ENCODE measurements at regions of chr2 and their contacts with region 1.

Region 1: GRCh38 chr2:8681786-8682692 is at the start of gene ID2:
- DNase-seq: peak; percentile 99
- H3K4me3 Mint-ChIP-seq: peak within 1 kb of the TSS; percentile 98
- H3K27ac Mint-ChIP-seq: peak within 1 kb of the TSS; percentile 95
- H3K4me1 Mint-ChIP-seq: peaks cover 35% of the 10 kb centered on the region
- H3K27me3 Mint-ChIP-seq: peaks cover 15% of the 10 kb centered on the region
- total RNA-seq, gene ID2: 182 to 193 TPM

Region 2: DNA sequence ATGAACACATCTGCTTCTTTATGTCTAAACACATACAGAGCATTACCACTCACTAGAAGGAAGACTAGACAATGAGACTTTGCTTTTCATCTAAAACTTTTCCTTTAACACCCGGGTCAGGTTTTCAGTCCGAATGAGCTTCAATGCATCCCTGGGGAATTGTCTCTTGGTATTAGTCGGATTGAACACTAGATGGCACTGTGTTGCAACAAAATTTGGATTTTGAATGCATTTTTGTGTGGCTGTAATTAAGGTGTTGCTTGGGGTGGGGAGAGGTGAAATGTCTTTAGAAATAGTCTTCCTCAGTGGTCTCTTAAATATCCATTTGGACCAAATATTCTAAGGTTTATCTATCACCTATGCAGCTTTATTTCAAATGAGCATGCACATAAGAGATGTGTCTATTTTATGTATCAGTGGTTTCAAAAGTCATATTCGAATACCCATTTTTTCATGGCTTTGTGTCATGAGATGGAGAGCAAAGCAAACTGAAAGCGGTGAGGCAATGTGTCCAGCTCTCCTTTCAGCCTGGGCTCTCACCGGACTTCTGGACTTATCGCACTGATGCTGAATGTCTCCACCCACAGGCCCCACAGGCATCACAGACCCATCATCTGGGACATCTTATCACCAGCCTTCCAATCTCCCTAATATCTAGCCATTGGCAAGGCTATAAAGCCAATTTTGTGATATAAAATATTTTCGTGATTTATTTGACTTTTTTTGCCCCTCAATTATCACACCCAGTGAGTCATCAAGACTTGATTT is 1254.6 kb before region 1 on chr2:
- CTCF ChIA-PET with region 1: interaction called, 14 read pairs
- POLR2A ChIA-PET with region 1: interaction called, 4 read pairs
- intact Hi-C with region 1: loop called (anchors 1 kb)
- DNase-seq: no peak
- H3K4me3 Mint-ChIP-seq: peak overlapping the region; percentile 35
- H3K27ac Mint-ChIP-seq: peak overlapping the region; percentile 68
- H3K4me1 Mint-ChIP-seq: peaks cover 38% of the 10 kb centered on the region
- H3K27me3 Mint-ChIP-seq: peaks cover 14% of the 10 kb centered on the region

Region 3: DNA sequence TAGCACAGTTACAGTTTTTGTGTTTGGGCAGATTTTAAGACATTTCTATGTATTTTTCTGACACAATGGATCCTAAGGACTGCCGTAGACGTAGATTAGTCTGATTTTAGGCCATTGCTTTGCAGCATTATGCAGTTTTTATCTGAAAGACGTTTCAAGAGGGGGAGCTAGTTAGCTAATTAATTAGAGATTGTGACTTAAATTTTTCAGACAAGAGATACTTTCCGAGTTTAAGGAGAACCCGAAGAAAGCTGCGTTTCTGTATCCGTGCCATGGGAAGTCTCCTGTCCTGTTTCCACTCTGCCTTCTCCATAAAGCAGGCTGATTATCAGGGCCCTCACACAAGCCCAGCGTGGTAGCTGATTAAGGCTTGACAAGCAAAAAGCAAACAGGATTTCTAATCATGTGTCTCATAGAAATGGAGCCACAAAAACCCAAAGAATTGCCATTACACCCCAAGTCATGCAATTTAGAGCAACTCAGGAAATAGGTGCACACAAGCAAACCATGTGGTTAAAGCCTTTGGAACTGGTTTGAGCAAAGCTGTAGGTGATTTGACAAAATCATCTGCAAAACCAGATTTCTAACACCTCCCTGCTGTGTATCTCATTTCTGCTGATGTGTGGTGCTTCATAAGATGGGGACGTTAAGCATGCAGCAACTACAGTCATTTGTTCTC is 956.7 kb before region 1 on chr2:
- CTCF ChIA-PET with region 1: interaction called, 3 read pairs
- POLR2A ChIA-PET with region 1: interaction called, 18 read pairs
- intact Hi-C with region 1: loop called (anchors 1 kb)
- DNase-seq: peak; percentile 46
- H3K4me3 Mint-ChIP-seq: peak overlapping the region; percentile 68
- H3K27ac Mint-ChIP-seq: peak overlapping the region; percentile 80
- H3K4me1 Mint-ChIP-seq: peaks cover 36% of the 10 kb centered on the region
- H3K27me3 Mint-ChIP-seq: no peaks in the 10 kb centered on the region

Region 4: DNA sequence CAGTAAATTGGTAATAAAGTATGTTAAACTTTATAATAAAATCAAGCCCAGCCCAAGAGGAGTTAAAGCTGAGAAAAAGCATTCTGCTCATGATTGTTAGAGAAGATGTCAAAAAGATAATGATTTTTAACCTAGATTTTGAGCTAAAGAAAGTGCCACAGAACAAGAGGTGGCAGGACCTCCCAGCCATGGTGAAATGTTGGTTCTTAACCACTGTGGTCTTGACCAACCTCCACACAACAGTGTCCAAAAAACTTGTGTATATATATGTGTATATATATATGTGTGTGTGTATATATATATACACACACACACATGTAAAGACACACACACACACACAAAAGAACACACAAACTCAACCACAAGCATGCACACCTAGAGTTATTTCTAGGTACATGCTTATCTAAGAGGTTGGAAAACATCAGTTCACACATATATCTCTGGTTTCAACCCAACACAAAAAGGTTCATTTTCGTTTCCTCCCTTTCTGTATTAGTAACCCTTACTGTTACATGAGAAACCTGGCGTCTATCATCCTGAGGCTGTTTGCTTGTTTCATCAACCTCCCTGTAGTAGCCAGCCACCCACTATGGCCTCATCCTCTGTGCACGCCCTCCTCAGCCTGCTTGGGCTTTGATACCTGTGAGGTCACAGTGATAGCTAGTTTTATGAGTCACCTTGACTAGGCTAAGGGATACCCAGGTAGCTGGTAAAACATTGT is 632.0 kb before region 1 on chr2:
- CTCF ChIA-PET with region 1: no interaction called
- POLR2A ChIA-PET with region 1: no interaction called
- intact Hi-C with region 1: loop called (anchors 1 kb)
- DNase-seq: peak; percentile 88
- H3K4me3 Mint-ChIP-seq: no peak overlapping the region
- H3K27ac Mint-ChIP-seq: peak overlapping the region; percentile 78
- H3K4me1 Mint-ChIP-seq: peaks cover 28% of the 10 kb centered on the region
- H3K27me3 Mint-ChIP-seq: peaks cover 1% of the 10 kb centered on the region

Region 5: GRCh38 chr2:8378016-8378810 is 303.8 kb before region 1 on chr2:
- CTCF ChIA-PET with region 1: no interaction called
- POLR2A ChIA-PET with region 1: interaction called, 13 read pairs
- intact Hi-C with region 1: no loop called
- DNase-seq: peak; percentile 49
- H3K4me3 Mint-ChIP-seq: no peak overlapping the region
- H3K27ac Mint-ChIP-seq: peak overlapping the region; percentile 56
- H3K4me1 Mint-ChIP-seq: peaks cover 38% of the 10 kb centered on the region
- H3K27me3 Mint-ChIP-seq: no peaks in the 10 kb centered on the region

Region 6: GRCh38 chr2:8514796-8515758 is 167.0 kb before region 1 on chr2:
- CTCF ChIA-PET with region 1: interaction called, 5 read pairs
- POLR2A ChIA-PET with region 1: interaction called, 55 read pairs
- intact Hi-C with region 1: loop called (anchors 1 kb)
- DNase-seq: peak; percentile 82
- H3K4me3 Mint-ChIP-seq: peak overlapping the region; percentile 59
- H3K27ac Mint-ChIP-seq: peak overlapping the region; percentile 98
- H3K4me1 Mint-ChIP-seq: peaks cover 66% of the 10 kb centered on the region
- H3K27me3 Mint-ChIP-seq: no peaks in the 10 kb centered on the region

Region 7: DNA sequence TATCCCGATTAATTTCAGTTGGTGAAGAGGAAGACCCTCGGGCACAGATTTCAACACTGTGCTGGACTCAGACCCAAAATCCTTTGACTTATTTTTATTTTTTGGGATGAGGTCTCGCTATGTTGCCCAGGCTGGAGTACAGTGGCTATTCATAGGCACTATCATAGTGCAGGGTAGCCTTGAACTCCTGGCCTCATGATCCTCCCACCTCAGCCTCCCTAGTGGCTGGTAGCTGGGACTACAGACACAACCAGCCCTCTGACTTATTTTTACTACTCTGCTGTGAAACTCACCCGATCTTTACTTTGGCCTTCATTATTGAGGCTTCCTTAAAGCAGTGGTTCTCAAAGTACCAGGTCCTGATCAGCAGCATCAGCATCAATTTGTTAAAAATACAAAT is 891.8 kb after region 1 on chr2:
- CTCF ChIA-PET with region 1: no interaction called
- POLR2A ChIA-PET with region 1: no interaction called
- intact Hi-C with region 1: no loop called
- DNase-seq: no peak
- H3K4me3 Mint-ChIP-seq: no peak overlapping the region
- H3K27ac Mint-ChIP-seq: no peak overlapping the region
- H3K4me1 Mint-ChIP-seq: peaks cover 17% of the 10 kb centered on the region
- H3K27me3 Mint-ChIP-seq: no peaks in the 10 kb centered on the region